Posterior vena cava (tissue), 2 donors: ENCODE measurements at regions of chr11 and their contacts with region 1.

Region 1: GRCh38 chr11:106733635-106734034 is 284.6 kb downstream of the GUCY1A2 start:
- DNase-seq: no peak

Region 2: DNA sequence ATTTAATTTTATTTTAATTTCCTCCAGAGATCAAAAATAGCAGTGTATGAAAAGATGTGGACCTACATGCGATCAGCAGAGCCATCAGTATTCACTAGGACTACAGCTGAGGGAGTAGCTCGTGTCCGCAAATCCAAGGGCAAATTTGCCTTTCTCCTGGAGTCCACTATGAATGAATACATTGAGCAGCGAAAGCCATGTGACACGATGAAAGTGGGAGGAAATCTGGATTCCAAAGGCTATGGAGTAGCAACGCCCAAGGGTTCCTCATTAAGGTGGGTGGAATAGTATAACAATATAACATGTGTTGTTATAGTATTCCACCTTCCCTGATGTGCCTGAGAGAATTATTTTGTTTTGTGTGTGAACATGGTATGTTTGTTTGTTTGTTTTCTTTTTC is 799.9 kb before region 1 on chr11:
- intact Hi-C with region 1: loop called in 1 of 2 experiments (anchors 5 kb)
- DNase-seq: no peak